CD4-positive, alpha-beta T cell (primary cell): ENCODE measurements at regions of chr15 and their contacts with region 1.

Region 1: DNA sequence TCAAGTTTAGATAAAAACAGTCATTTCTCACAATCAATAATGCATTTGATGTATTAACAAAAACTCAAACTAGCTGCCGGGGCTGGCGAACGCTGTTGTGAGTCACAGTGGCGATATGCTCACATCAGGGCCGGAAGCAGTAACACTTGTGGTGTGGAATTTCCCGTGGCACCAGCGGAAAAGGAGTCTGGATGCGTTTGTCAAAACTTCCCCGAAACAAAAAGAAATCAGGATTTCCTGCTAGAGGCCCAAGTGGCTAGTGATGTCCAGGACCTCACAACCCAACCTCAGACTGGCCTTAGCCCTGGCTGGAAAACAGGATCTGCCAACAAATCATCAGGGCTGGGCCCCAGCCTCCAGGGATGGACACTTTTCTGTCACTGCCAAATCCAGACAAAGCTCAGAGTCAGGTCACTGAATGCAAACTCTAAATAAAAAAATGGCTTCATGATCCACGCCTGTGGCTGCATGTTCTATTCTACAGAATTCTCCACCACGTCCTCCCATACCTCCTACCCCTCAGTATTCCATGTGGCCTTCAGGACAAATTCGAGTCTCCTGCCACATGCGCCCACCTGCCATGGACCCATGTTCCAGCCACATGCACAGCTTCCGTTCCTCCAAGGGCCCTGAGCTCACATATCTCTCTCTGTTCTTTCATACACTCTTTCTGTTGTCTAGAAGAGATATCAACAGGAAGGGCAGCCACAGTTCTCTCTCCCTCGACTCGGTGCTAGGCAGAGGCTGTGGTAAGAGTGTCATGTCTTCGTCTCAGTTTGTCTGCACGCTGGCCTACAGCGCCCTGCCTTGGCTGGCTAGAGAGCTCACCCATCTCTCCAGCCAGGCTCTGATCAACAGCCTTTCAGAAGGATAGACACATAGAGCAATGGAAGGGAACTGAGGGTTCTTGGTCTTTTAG is 35.4 kb downstream of the EHD4 start:
- DNase-seq: peak; percentile 61 to 95 (median 74)
- ATAC-seq: peak; percentile 81
- H3K4me3 ChIP-seq: peak overlapping the region; percentile 11
- H3K4me3 Mint-ChIP-seq: peak overlapping the region; percentile 83
- H3K27ac ChIP-seq: peak overlapping the region; percentile 97
- H3K27ac Mint-ChIP-seq: peak overlapping the region; percentile 89
- H3K4me1 ChIP-seq: peaks cover 68% of the 10 kb centered on the region
- H3K4me1 Mint-ChIP-seq: peaks cover 63% of the 10 kb centered on the region
- H3K27me3 ChIP-seq: no peaks in the 10 kb centered on the region
- H3K27me3 Mint-ChIP-seq: no peaks in the 10 kb centered on the region
- CTCF ChIP-seq: peak; percentile 42

Region 2: GRCh38 chr15:41774062-41774881 is 162.6 kb before region 1 on chr15 and contains the start of gene MAPKBP1:
- CTCF ChIA-PET with region 1: interaction called, 33 read pairs
- POLR2A ChIA-PET with region 1: interaction called, 30 read pairs
- intact Hi-C with region 1: loop called in 1 of 2 experiments (anchors 1 kb)
- DNase-seq: peak; percentile 92 to 99 (median 97)
- ATAC-seq: peak; percentile 88
- H3K4me3 ChIP-seq: peak within 1 kb of the TSS; percentile 89
- H3K4me3 Mint-ChIP-seq: peak within 1 kb of the TSS; percentile 96
- H3K27ac ChIP-seq: peak within 1 kb of the TSS; percentile 57 to 72
- H3K27ac Mint-ChIP-seq: peak within 1 kb of the TSS; percentile 83
- H3K4me1 ChIP-seq: peaks cover 46% of the 10 kb centered on the region
- H3K4me1 Mint-ChIP-seq: peaks cover 65% of the 10 kb centered on the region
- H3K27me3 ChIP-seq: no peaks in the 10 kb centered on the region
- H3K27me3 Mint-ChIP-seq: no peaks in the 10 kb centered on the region
- CTCF ChIP-seq: peak; percentile 70
- total RNA-seq, gene MAPKBP1: 26.0 to 30.0 TPM

Region 3: DNA sequence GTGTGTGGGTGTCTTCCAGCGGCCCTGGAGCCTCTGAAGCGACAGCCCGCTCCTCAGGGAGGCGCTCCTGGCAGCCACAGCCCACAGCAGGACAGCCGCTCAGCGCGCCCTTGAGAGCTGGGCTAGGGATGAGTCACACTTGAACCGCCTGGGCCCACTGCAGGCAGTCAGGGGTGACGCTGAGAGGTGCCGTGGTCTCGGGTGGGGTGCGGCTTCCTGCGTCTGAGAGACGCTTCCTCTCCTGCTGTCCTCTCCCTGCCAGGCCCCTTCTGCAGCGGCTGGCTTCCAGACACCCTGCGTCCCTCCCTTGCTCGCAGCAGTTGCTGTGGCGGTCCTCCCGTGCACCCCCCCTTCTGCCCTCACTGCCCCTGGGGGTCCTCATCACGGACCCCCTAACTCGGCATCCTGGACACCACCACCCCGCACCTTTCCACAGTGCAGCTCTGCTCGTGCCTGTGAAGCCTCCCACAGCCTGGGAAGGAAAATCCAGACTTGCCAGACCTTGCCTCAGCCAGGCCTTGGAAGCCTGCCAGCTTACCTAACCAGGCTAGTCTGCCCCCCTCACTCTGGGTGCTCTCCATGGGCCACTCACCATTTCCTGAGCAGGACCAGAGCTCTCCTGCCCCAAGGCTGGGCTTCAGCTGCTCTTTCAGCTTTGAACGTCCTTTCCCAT is 42.0 kb before region 1 on chr15:
- CTCF ChIA-PET with region 1: interaction called, 24 read pairs
- POLR2A ChIA-PET with region 1: interaction called, 24 read pairs
- intact Hi-C with region 1: loop called (anchors 2 to 5 kb)
- DNase-seq: peak; percentile 79 to 95 (median 90)
- ATAC-seq: peak; percentile 93
- H3K4me3 ChIP-seq: peak overlapping the region; percentile 36
- H3K4me3 Mint-ChIP-seq: peak overlapping the region; percentile 83
- H3K27ac ChIP-seq: peak overlapping the region; percentile 85 to 92
- H3K27ac Mint-ChIP-seq: peak overlapping the region; percentile 100
- H3K4me1 ChIP-seq: peaks cover 52% of the 10 kb centered on the region
- H3K4me1 Mint-ChIP-seq: peaks cover 58% of the 10 kb centered on the region
- H3K27me3 ChIP-seq: no peaks in the 10 kb centered on the region
- H3K27me3 Mint-ChIP-seq: no peaks in the 10 kb centered on the region
- CTCF ChIP-seq: no peak

Region 4: DNA sequence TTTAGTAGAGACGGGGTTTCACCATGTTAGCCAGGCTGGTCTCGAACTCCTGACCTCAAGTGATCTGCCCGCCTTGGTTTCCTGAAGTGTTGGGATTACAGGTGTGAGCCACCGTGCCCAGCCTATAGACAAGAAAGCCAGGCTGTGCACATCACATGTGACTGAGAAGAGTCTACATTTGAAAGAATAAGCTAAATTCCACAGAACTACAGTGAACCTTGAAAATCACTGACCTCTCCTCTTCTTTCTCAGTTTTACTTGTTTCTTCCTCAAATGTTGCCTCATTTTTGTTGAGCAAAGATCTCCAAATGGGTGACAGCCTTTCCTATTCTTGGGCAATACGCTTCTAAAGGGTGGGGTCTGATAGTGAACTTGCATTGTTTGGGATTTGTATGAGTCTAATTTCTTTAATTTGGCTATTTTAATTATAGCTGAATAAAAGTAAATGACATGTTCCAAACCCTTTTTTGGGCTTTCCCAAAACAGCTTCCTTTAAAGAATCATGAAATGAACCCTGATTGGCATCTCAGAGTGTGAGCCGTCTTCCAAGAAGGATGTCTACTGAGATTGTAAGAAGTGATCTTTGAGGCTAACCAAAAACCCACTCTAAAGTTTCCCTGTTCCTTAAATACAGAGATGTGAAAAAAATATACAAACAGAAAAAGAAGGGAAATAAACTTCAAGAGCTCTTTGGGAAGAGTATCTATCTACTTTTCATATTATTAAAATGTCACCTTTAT is 21.5 kb before region 1 on chr15:
- CTCF ChIA-PET with region 1: interaction called, 11 read pairs
- POLR2A ChIA-PET with region 1: interaction called, 5 read pairs
- intact Hi-C with region 1: no loop called
- DNase-seq: no peak
- ATAC-seq: no peak
- H3K4me3 ChIP-seq: no peak overlapping the region
- H3K4me3 Mint-ChIP-seq: no peak overlapping the region
- H3K27ac ChIP-seq: no peak overlapping the region
- H3K27ac Mint-ChIP-seq: no peak overlapping the region
- H3K4me1 ChIP-seq: no peaks in the 10 kb centered on the region
- H3K4me1 Mint-ChIP-seq: peaks cover 14% of the 10 kb centered on the region
- H3K27me3 ChIP-seq: no peaks in the 10 kb centered on the region
- H3K27me3 Mint-ChIP-seq: no peaks in the 10 kb centered on the region
- CTCF ChIP-seq: no peak

Region 5: GRCh38 chr15:41972253-41973242 is 35.6 kb after region 1 on chr15 and contains the start of gene EHD4:
- CTCF ChIA-PET with region 1: interaction called, 42 read pairs
- POLR2A ChIA-PET with region 1: interaction called, 209 read pairs
- intact Hi-C with region 1: loop called (anchors 1 to 2 kb)
- DNase-seq: peak; percentile 84 to 99 (median 90)
- ATAC-seq: peak; percentile 78
- H3K4me3 ChIP-seq: peak within 1 kb of the TSS; percentile 82
- H3K4me3 Mint-ChIP-seq: peak within 1 kb of the TSS; percentile 98
- H3K27ac ChIP-seq: peak within 1 kb of the TSS; percentile 61 to 81
- H3K27ac Mint-ChIP-seq: peak within 1 kb of the TSS; percentile 95
- H3K4me1 ChIP-seq: peaks cover 40% of the 10 kb centered on the region
- H3K4me1 Mint-ChIP-seq: peaks cover 46% of the 10 kb centered on the region
- H3K27me3 ChIP-seq: peaks cover 0 to 5% of the 10 kb centered on the region in 2 experiments
- H3K27me3 Mint-ChIP-seq: peaks cover 19% of the 10 kb centered on the region
- CTCF ChIP-seq: no peak
- total RNA-seq, gene EHD4: 39.8 to 40.5 TPM

Region 6: DNA sequence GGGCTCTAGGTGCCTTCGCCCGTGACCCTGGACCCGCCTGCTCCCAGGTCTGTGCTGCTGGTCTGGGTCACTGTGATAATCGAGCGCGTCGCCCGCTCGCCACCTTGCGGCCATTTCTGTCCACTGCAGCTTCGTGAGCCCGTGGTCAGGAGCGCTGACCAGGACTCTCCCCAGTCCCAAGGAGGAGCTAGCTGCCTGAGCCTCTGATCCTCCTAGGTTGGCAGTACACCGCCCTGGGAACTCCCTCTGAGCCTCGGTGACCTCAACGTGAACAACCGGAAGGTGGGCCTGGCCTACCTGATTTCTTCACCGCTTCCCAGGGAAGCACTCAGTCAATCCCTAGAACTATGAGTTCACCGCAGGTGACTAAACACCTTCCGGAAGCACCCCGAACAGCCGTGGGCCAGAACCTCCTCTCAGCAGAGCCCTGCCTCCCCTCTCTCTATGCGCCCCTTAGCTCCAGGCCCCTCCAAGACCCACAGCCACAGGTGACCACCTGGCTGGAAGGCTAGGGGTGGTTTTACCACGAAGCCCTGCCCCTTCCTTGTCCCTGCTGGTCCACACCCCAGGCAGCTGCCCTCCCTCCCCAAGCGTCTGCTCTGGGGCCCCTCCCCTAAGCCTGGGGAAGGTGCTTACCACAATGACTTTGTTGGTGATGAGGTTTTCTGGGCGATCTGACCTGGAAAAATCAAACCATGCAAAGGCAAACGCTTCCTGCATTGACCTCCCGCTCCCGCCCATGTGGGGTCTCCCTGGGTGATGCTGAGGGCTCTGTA is 147.7 kb after region 1 on chr15:
- CTCF ChIA-PET with region 1: no interaction called
- POLR2A ChIA-PET with region 1: no interaction called
- intact Hi-C with region 1: no loop called
- DNase-seq: peak in 11 of 14 experiments; percentile 12 to 73 (median 32)
- ATAC-seq: peak; percentile 61
- H3K4me3 ChIP-seq: no peak overlapping the region
- H3K4me3 Mint-ChIP-seq: no peak overlapping the region
- H3K27ac ChIP-seq: no peak overlapping the region
- H3K27ac Mint-ChIP-seq: no peak overlapping the region
- H3K4me1 ChIP-seq: peaks cover 15% of the 10 kb centered on the region
- H3K4me1 Mint-ChIP-seq: no peaks in the 10 kb centered on the region
- H3K27me3 ChIP-seq: peaks cover 0 to 3% of the 10 kb centered on the region in 2 experiments
- H3K27me3 Mint-ChIP-seq: peaks cover 31% of the 10 kb centered on the region
- CTCF ChIP-seq: peak; percentile 81